ENCODE measurements at regions of chr1 and their contacts with region 1.

Region 1: DNA sequence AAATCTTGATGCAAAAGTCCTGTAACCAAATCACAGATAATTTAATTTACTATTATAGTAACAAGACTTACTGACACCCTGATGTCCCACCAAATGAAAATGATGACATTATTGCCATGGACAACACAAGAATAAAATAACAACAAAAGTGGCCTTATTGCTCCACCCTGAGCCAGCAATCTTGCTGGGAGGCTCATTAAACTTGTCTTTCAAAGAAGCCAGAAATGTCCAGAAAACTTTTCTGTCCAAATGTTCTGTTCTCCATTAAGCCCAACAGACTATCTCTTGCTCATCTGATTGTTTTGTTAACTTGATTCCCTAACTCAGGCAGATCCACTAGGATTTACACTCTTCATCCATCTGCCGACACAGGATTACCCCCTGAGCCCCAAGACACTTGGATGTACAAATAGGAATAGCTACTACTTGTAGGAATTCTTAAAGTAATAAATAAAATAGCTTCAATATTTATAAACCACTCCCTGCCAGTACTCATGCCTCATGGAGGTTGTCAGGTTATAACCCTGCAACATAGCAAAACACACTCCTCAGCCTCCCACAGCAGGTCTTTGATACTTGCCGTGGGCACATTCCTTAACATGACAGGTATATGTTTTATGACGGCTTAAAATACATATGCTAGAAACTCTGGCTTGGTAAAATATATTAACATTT is 84.9 kb downstream of the PTPN14 start:
- DNase-seq: no peak
- ATAC-seq: no peak
- H3K4me3 ChIP-seq: no peak overlapping the region
- H3K27ac ChIP-seq: no peak overlapping the region
- H3K4me1 ChIP-seq: no peaks in the 10 kb centered on the region
- H3K27me3 ChIP-seq: no peaks in the 10 kb centered on the region; a peak in 1 of 4 replicates
- CTCF ChIP-seq: no peak
- EP300 ChIP-seq: no peak
- POLR2A ChIP-seq: no peak
- RAD21 ChIP-seq: no peak

Region 2: GRCh38 chr1:214454619-214455396 is 11.7 kb before region 1 on chr1:
- CTCF ChIA-PET with region 1: interaction called, 6 read pairs
- POLR2A ChIA-PET with region 1: interaction called, 8 read pairs
- RAD21 ChIA-PET with region 1: interaction called, 7 read pairs
- SMC1A ChIA-PET with region 1: interaction called, 25 read pairs
- in situ Hi-C with region 1: no loop called
- intact Hi-C with region 1: no loop called
- DNase-seq: no peak
- ATAC-seq: peak; percentile 24; the same call in 1 of the 3 replicates
- H3K4me3 ChIP-seq: no peak overlapping the region
- H3K27ac ChIP-seq: no peak overlapping the region
- H3K4me1 ChIP-seq: no peaks in the 10 kb centered on the region
- H3K27me3 ChIP-seq: no peaks in the 10 kb centered on the region
- CTCF ChIP-seq: no peak
- EP300 ChIP-seq: no peak
- POLR2A ChIP-seq: no peak
- RAD21 ChIP-seq: no peak

Measured in GM12878 (cell line).